ENCODE measurements at regions of chr16 and their contacts with region 1.

Region 1: GRCh38 chr16:81451753-81452680 is 7.4 kb downstream of the CMIP start:
- DNase-seq: peak in 33 of 35 experiments; percentile 29 to 75 (median 56)
- ATAC-seq: peak; percentile 69 to 92 (median 74)
- H3K4me3 ChIP-seq: peak overlapping the region in 1 of 2 donors; percentile 44
- H3K4me3 Mint-ChIP-seq: peak overlapping the region; percentile 41 to 73 (median 51)
- H3K27ac ChIP-seq: peak overlapping the region; percentile 44
- H3K27ac Mint-ChIP-seq: peak overlapping the region; percentile 84 to 89
- H3K4me1 ChIP-seq: peaks cover 26 to 54% of the 10 kb centered on the region in 2 experiments
- H3K4me1 Mint-ChIP-seq: peaks cover 84 to 87% (median 85%) of the 10 kb centered on the region in 3 donors
- H3K27me3 ChIP-seq: no peaks in the 10 kb centered on the region
- H3K27me3 Mint-ChIP-seq: no peaks in the 10 kb centered on the region

Region 2: DNA sequence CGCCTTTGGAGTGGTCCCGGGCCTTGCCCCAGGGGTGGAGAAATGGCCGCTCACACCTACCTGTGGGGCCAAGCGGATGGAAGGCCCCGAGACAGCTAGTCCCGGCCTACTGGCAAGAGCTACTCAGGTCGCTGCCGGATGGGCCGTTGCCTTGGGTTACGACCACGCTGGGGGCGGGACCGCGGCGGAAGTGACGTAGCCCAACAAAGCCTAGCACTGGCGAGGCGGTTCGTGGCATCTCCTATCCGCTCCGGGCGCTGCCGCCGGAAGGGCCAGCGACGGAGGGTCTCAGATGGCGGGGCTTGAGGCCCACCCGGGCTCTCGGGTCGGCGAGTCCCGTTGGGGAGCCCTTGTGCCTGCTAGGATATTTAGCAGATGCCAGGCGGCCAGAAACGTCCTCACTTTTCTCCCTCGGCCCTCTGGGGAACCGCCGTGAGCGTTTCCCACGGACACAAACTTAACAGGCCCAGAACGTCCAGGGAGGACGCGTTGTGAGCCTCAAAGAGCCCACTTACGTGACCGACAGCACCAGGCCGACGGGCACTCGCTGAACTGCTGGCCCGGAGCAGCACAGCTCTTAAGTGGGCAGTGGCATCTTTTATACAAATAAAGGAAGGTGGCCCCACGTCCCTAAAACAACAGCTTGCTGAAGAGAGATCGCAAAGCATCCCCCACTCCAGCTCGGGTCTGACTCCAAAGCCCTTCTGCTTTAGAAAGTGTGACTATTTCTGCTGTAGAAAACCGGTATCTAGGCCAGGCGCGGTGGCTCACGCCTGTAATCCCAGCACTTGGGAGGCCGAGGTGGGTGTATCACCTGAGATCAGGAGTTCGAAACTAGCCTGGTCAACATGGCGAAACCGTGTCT is 374.7 kb before region 1 on chr16 and contains the start of gene C16orf46:
- CTCF ChIA-PET with region 1: no interaction called
- POLR2A ChIA-PET with region 1: interaction called in 1 of 2 experiments, 10 read pairs
- DNase-seq: peak; percentile 89 to 99 (median 95)
- ATAC-seq: peak; percentile 83 to 87 (median 85)
- H3K4me3 ChIP-seq: peak within 1 kb of the TSS; percentile 74 to 95
- H3K4me3 Mint-ChIP-seq: peak within 1 kb of the TSS in 2 of 3 donors; percentile 31 to 39
- H3K27ac ChIP-seq: peak within 1 kb of the TSS; percentile 89
- H3K27ac Mint-ChIP-seq: peak within 1 kb of the TSS in 1 of 2 donors; percentile 11
- H3K4me1 ChIP-seq: peaks cover 5 to 11% of the 10 kb centered on the region in 2 experiments
- H3K4me1 Mint-ChIP-seq: peaks cover 3 to 8% (median 6%) of the 10 kb centered on the region in 3 donors
- H3K27me3 ChIP-seq: no peaks in the 10 kb centered on the region
- H3K27me3 Mint-ChIP-seq: peaks cover 0 to 2% of the 10 kb centered on the region in 2 donors
- total RNA-seq, gene C16orf46: 0.26 to 0.96 (median 0.36) TPM in 4 of 5 donors, not detected in the other